ENCODE measurements at regions of chr3 and their contacts with region 1.

Region 1: GRCh38 chr3:197029511-197030167 is at the start of gene MELTF:
- DNase-seq: no peak
- H3K4me3 ChIP-seq: peak within 1 kb of the TSS; percentile 52
- CTCF ChIP-seq: peak; percentile 39

Region 2: DNA sequence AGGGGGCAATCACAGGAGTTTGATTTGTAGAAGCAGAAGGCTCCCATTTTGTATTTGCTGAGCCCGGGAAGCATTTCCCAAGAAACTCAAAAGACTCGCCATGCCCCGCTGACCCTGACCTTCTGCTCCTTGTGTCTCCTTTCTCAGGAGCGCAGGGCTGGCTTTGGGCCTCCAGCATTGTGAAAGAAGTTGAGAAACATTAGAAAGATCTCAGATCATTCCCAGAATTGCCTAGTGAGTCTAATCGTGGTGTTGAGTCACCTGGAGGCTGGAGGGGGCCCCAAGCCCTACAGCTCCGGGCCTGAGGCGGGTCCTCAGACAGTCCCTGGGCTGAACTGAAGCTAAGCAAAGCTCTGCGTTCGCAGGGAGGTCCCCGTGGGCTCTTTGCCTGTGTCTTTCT is 50.1 kb before region 1 on chr3:
- CTCF ChIA-PET with region 1: interaction called, 15 read pairs
- POLR2A ChIA-PET with region 1: no interaction called
- DNase-seq: peak; percentile 17
- H3K4me3 ChIP-seq: no peak overlapping the region
- CTCF ChIP-seq: no peak

Region 3: GRCh38 chr3:197002701-197003454 is 26.8 kb before region 1 on chr3:
- CTCF ChIA-PET with region 1: interaction called, 80 read pairs
- POLR2A ChIA-PET with region 1: no interaction called
- DNase-seq: no peak
- H3K4me3 ChIP-seq: peak overlapping the region; percentile 62
- CTCF ChIP-seq: peak; percentile 82

Region 4: GRCh38 chr3:197010556-197011351 is 18.9 kb before region 1 on chr3:
- CTCF ChIA-PET with region 1: interaction called, 80 read pairs
- POLR2A ChIA-PET with region 1: no interaction called
- DNase-seq: no peak
- H3K4me3 ChIP-seq: no peak overlapping the region
- CTCF ChIP-seq: no peak

Region 5: GRCh38 chr3:197015766-197016736 is 13.6 kb before region 1 on chr3:
- CTCF ChIA-PET with region 1: interaction called, 30 read pairs
- POLR2A ChIA-PET with region 1: no interaction called
- DNase-seq: no peak
- H3K4me3 ChIP-seq: no peak overlapping the region
- CTCF ChIP-seq: no peak

Region 6: DNA sequence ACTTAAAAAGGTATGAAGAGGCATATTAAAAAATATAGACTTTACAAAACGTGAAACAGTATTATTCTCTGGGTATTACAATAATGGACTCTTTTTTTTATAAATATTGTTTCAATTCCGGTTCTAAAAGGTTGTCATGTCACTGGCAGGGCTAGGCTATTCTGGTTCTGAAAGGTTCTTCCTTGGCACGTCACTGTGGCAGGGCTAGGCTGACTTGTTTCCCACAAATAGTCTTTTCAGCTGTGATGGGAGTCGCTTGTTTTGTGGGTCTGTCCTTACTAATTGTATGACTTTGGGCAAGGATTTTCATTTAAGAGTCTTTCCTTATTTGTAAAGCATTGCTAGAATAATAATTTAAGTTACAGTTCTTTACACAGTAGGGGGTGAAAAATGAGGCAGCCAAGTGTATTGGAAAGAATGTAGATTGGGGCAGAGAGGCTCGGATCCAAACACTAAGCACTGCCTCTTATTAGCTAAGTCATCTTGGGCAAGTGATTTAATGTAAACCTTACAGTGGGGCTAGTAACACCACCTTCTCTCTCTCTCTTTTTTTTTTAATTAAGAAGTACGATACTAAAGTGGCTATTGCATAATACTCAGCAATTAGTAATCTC is 12.3 kb after region 1 on chr3:
- CTCF ChIA-PET with region 1: interaction called, 47 read pairs
- POLR2A ChIA-PET with region 1: no interaction called
- DNase-seq: peak; percentile 10
- H3K4me3 ChIP-seq: no peak overlapping the region
- CTCF ChIP-seq: no peak

Region 7: GRCh38 chr3:197068077-197068476 is 38.4 kb after region 1 on chr3:
- CTCF ChIA-PET with region 1: interaction called, 11 read pairs
- POLR2A ChIA-PET with region 1: no interaction called
- DNase-seq: no peak
- H3K4me3 ChIP-seq: no peak overlapping the region
- CTCF ChIP-seq: no peak

Region 8: GRCh38 chr3:197158516-197158915 is 128.9 kb after region 1 on chr3:
- CTCF ChIA-PET with region 1: no interaction called
- POLR2A ChIA-PET with region 1: no interaction called
- DNase-seq: no peak
- H3K4me3 ChIP-seq: no peak overlapping the region
- CTCF ChIP-seq: no peak